Dendritic cell treated with granulocyte-macrophage colony-stimulating factor and Interleukin-4, amounts not matched to agents 40 ng/mL and 50 ng/mL, for 4 days (primary cell): ENCODE measurements at regions of chr1 and their contacts with region 1.

Region 1: DNA sequence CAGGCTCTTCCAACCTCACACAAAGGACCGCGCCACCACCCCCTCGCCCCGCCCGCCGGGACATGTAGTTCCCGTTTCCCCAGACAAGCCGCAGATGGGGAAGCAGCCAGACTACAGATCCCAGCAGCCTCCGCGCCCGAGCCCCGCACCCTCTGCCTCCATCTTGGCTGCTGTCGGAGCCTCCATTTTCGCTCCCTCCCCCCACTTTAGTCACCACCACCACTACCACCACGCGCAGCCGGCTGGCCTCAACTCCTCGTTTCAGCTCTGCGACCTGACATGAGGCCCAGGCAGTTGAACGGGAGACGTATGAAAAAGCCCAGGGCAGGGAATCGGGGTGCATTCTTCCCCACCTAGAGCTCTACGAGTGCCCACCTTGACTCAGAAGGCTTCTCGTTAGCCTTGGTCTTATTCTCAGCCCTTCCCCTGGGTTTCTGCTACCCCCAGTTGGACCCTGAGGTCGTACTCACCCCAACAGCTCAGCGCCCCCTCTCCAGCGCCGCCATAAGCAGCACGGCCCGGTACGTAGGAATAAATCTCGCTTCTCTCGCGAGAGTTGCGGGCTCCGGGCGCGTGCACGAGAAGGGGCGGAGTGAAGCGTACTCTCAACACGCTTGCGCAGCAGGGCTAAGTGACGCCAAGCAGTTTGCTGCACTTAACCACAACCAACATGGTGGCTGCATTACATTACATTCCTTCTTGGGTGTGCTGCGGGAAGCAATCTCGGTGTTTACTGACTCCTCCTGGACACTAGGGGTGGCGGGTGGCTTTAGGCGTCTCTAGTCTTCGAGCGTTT is at the start of gene CSDE1:
- H3K4me3 Mint-ChIP-seq: peak within 1 kb of the TSS; percentile 97
- H3K27ac Mint-ChIP-seq: peak within 1 kb of the TSS; percentile 100
- H3K4me1 Mint-ChIP-seq: peaks cover 41% of the 10 kb centered on the region
- H3K27me3 Mint-ChIP-seq: no peaks in the 10 kb centered on the region

Region 2: DNA sequence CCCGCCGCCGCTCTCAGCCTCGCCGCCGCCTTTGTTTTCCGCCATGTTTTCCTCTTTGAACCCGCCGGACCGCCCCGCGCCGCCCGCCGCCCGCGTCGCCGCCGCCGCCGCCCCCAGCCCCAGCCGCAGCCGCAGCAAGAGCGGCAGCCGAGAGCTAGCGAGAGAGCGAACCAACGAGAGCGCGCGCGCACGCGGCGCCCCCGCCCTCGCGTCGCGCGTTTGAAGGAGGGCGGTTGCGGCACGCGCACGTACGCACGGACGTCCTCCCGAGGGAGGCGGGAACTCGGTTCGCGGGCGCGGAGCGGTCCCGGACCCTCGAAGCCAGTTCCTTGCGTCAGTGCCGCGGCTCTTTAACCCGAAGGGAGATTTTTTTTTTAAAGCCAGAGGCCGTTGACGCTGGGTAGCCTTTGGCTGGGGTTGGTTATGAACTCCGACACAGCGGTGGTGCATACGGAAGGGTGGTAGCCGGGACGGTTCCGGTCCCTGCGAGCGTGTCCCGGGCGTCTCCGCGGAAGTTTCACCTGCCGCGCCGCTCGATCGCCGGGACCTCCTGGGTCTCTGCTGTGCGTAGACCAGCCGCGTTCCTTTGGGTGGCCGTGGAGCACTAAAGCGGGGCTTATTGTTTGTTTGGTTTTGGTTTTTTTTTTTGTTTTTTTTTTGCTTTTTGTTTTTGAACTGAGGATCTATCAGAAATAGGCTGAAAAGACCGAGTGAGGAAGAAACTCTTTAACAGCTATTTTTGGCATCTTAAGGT is 246.4 kb before region 1 on chr1 and contains the start of gene TRIM33:
- intact Hi-C with region 1: loop called (anchors 5 kb)
- H3K4me3 Mint-ChIP-seq: peak within 1 kb of the TSS; percentile 89
- H3K27ac Mint-ChIP-seq: peak within 1 kb of the TSS; percentile 100
- H3K4me1 Mint-ChIP-seq: peaks cover 46% of the 10 kb centered on the region
- H3K27me3 Mint-ChIP-seq: peaks cover 2% of the 10 kb centered on the region

Region 3: GRCh38 chr1:114716304-114717170 is 41.1 kb before region 1 on chr1 and contains the start of gene NRAS:
- intact Hi-C with region 1: loop called (anchors 1 kb)
- H3K4me3 Mint-ChIP-seq: peak within 1 kb of the TSS; percentile 98
- H3K27ac Mint-ChIP-seq: peak within 1 kb of the TSS; percentile 100
- H3K4me1 Mint-ChIP-seq: no peaks in the 10 kb centered on the region
- H3K27me3 Mint-ChIP-seq: no peaks in the 10 kb centered on the region